Aorta (tissue), 5 donors: ENCODE measurements at regions of chr12 and their contacts with region 1.

Region 1: DNA sequence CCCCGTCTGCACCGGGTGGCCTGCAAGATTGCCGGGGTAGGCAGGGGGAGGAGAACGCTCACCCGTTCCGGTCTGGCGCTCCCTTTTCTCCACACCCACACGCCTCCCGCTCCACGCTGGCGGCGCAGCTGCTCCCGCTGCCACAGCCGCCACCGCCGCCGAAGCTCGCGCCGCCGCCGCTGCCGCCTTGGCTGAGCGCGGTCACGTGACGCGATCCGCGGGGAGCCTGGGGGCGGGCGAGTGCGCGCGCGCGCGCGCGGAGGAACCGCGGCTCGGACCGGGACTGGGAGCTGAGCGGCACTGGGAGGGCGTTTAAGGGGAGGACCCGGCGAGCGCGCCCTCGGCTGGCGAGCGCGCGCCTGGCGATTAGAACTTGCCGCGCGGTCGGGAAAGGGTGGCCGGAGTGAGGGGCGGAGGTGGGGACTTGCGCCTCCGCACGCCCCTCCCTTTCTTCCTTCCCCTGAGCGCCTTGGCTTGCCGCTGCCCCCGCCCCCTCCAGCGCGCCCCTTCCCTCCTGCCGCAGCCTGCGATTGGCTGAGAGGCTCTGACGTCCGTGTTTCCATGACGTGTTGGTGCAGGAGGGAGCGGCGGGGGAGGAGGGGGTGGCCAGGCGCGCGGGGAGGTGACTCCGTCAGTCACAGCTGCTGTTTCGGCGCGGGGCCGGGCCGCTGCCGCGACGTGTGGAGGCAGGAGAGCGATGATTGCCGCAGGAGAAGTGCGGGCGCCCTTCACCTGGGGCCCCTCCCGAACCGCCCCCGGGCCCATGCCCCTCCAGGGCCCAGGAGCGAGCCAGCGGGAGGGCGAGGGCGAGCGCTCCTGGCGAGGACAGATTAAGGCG is 738 bp upstream of the ATP2B1 start:
- DNase-seq: peak; percentile 100
- ATAC-seq: peak; percentile 97
- H3K4me3 ChIP-seq: peak overlapping the region; percentile 52 to 94
- H3K27ac ChIP-seq: peak overlapping the region; percentile 34 to 91
- H3K4me1 ChIP-seq: no peaks in the 10 kb centered on the region
- H3K27me3 ChIP-seq: no peaks in the 10 kb centered on the region

Region 2: GRCh38 chr12:89470741-89471509 is 238.5 kb before region 1 on chr12:
- intact Hi-C with region 1: no loop called
- DNase-seq: no peak
- ATAC-seq: peak; percentile 76
- H3K4me3 ChIP-seq: no peak overlapping the region
- H3K27ac ChIP-seq: no peak overlapping the region
- H3K4me1 ChIP-seq: no peaks in the 10 kb centered on the region
- H3K27me3 ChIP-seq: no peaks in the 10 kb centered on the region

Region 3: DNA sequence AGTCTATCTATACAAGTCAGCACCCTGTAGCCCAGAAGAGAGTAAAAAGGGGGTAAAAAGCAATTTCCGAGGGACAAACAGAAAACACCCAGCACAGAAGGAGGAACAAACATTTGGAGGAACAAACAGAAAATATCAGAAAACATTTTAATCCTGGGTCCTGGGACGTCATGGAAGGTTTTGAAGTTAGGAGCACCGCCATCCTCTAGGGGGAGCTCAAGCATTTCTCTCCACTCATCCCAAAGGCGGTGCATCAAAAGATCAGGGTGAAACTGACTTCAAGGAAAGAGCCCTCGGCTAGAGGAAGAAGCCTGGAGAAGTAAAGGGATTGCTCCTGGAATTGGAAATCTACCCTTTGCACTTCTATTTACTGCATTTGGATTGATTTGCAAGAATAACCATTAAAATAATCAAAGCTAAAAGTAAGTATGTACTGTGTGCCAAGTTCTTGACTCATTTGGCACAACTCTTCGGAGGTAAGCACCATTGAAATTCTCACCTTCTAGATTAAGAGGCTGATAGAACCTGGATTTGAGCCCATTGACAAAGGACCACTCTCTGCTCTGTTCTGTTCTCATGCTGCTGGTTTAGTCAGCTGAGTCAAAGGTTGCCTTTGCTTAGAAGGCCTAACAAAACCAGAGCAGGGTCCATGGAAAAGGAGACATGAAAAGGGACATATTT is 166.3 kb before region 1 on chr12:
- intact Hi-C with region 1: loop called (anchors 5 to 10 kb)
- DNase-seq: peak in 1 of 2 donors; percentile 62
- ATAC-seq: peak; percentile 78
- H3K4me3 ChIP-seq: no peak overlapping the region
- H3K27ac ChIP-seq: no peak overlapping the region
- H3K4me1 ChIP-seq: peaks cover 0 to 2% of the 10 kb centered on the region in 2 donors
- H3K27me3 ChIP-seq: no peaks in the 10 kb centered on the region

Region 4: DNA sequence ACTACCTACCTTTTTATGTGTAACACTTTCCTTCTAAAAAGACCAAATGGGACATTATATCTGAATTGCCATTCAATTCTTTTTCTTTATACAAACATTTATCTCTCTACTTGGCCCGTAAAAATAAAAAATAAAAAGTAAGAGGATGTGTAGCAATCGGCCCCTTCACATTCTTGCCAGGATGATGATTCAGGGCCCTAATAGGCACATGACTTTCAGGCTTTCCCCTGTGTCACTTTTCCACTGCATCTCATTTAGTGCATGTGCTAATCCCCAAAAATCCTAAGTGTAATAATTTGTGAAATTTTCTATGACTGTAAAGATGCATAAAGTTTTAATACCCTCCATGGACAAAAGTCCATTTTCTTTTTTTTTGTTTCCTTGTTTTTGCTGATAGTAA is 22.2 kb after region 1 on chr12:
- intact Hi-C with region 1: no loop called
- DNase-seq: no peak
- ATAC-seq: peak; percentile 79
- H3K4me3 ChIP-seq: no peak overlapping the region
- H3K27ac ChIP-seq: no peak overlapping the region
- H3K4me1 ChIP-seq: no peaks in the 10 kb centered on the region
- H3K27me3 ChIP-seq: no peaks in the 10 kb centered on the region

Region 5: GRCh38 chr12:89949457-89950195 is 240.2 kb after region 1 on chr12:
- intact Hi-C with region 1: loop called in 1 of 2 experiments (anchors 5 kb)
- DNase-seq: no peak
- ATAC-seq: peak; percentile 61
- H3K4me3 ChIP-seq: no peak overlapping the region
- H3K27ac ChIP-seq: no peak overlapping the region
- H3K4me1 ChIP-seq: peaks cover 1 to 5% of the 10 kb centered on the region in 2 donors
- H3K27me3 ChIP-seq: no peaks in the 10 kb centered on the region